A549 (cell line): ENCODE measurements at regions of chr15 and their contacts with region 1.

Region 1: DNA sequence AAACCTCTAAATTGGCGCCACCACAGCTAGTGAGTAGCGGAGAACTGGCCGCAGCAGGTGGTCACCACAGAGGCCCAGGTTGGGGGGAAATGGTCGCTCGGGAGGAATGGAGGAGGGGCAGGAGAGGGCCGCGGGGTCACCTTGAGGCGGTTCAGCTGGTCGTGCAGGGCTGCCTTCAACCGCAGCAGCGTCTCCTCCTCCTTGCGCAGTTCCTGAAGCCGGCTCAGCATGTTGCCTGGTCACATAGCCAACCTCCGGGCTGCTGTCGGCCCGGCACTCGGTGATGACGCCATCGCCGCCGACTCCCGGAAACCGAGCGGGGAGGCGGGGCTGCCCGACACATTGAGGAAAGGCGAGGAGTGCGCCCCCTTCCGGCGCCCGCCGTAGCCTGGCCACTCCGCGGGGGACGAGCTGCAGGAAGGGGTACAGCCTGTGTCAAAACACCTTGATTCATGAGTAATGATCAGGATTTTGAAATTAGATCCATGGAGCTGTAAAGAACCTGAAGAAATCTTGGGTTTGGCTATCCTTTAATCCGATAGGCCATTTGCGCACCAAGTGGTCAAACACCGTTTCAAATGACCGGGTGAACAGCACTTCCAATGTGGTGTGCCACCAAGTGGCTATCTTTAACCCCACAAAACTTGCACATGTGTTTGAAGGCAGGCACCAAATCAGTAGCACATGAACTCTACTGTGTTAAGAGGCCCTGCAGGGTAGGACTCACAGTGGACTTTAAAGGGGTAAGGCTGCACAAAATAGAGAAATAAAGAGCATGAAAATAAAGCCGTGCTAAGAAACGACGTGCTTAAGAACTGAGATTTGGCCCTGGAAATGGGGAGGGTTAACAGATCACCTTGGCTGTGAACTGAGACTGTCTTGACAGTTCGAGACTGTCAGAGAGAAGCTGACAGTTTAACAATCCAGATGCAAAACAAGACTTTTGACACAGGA is at the start of gene SNAPC5:
- DNase-seq: peak; percentile 85 to 96
- ATAC-seq: peak; percentile 84 to 89
- H3K4me3 ChIP-seq: peak within 1 kb of the TSS; percentile 84
- H3K27ac ChIP-seq: peak within 1 kb of the TSS; percentile 91 to 92
- H3K4me1 ChIP-seq: peaks cover 54% of the 10 kb centered on the region
- CTCF ChIP-seq: peak; percentile 100
- EP300 ChIP-seq: no peak
- POLR2A ChIP-seq: peak; percentile 87
- RAD21 ChIP-seq: peak; percentile 36 to 67
- polyA plus RNA-seq, gene SNAPC5: 70.5 and 84.9 TPM in 2 replicates

Region 2: DNA sequence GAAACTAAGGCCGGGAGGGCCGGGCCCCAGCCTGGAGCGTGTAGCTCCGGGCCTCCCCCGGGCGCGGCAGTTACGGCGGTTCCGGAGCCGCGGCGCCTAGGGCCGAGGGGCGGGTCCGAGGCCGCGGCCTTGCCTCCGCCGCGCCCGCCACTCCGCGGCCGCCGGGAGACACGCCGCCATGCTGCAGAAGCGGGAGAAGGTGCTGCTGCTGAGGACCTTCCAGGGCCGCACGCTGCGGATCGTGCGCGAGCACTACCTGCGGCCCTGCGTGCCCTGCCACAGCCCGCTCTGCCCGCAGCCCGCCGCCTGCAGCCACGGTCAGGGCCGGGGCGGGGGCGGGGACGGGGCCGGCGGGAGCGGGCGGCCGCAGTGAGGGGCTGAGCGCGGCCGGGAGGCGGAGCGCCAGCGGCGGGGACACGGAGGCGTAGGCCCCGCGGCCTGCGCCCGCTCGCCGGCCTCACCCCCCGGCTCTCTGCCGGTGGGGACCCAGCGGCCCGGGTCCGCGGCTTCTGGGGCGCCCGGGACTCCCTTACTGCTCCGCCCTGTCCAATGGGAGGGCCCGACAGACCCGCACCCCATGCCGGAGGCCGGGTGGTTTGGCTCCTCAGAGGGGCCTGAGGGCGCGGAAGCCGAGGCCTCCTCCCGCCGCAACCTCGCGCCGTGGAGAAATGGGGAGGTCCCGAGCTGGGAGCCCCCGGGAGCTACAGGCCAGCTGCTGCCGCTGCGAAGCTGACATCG is 204.2 kb before region 1 on chr15 and contains the start of gene DIS3L:
- CTCF ChIA-PET with region 1: interaction called, 11 read pairs
- POLR2A ChIA-PET with region 1: interaction called, 3 read pairs
- DNase-seq: peak; percentile 81 to 82
- ATAC-seq: peak; percentile 89 to 90
- H3K4me3 ChIP-seq: peak within 1 kb of the TSS; percentile 51
- H3K27ac ChIP-seq: peak within 1 kb of the TSS; percentile 95
- H3K4me1 ChIP-seq: peaks cover 21% of the 10 kb centered on the region
- CTCF ChIP-seq: no peak
- EP300 ChIP-seq: no peak; a peak in 1 of 5 replicates
- POLR2A ChIP-seq: peak; percentile 84
- RAD21 ChIP-seq: no peak
- polyA plus RNA-seq, gene DIS3L: 64.3 and 74.9 TPM in 2 replicates

Region 3: DNA sequence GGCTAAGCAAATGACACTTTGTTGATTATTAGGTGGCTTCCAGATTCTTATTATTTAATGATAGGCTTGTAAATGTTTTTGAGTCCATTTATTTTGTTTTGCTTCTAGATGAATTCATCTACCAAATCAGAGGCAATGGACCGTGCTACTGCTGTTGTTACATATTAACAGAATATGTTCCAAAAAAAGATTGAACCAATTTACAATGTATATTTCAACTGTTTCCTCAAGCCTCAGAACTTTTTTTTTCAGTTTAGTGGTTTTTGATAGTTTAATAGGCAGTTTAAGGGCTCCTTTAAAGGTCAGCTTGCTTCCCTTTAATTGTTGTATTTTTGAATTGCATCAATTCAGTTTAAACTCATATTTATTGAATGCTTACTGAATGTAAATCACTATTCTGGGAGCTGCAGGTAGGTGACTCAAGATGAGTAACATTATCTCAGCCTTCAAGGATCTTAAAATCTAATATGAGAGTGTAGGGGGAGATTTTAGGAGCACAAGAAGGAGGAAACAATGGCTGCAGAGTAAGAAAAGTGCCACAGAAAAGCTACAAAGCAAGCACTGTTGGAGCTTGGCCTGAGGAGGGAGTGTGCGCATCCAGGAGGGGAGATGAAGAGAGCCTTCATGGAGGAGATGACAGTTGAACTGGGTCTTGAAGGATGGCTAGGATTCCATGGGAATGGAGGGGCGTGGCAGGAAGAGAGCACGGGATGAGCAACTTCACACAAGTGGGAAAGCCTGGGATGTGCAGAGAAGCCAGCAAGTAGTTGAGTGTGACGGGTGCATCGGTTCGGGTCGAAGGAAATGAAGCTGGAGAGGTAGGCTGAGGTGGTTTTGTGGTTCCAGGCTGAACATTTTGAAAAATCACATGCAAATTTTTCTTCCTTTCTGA is 96.4 kb before region 1 on chr15:
- CTCF ChIA-PET with region 1: interaction called, 20 read pairs
- POLR2A ChIA-PET with region 1: no interaction called
- DNase-seq: peak in 1 of 2 experiments; percentile 45
- ATAC-seq: peak; percentile 56 to 70; a peak in 4 of 6 replicates
- H3K4me3 ChIP-seq: no peak overlapping the region
- H3K27ac ChIP-seq: no peak overlapping the region
- H3K4me1 ChIP-seq: peaks cover 20% of the 10 kb centered on the region
- CTCF ChIP-seq: no peak
- EP300 ChIP-seq: no peak
- POLR2A ChIP-seq: no peak
- RAD21 ChIP-seq: no peak

Region 4: GRCh38 chr15:66472176-66472999 is 25.4 kb before region 1 on chr15:
- CTCF ChIA-PET with region 1: interaction called, 24 read pairs
- POLR2A ChIA-PET with region 1: no interaction called
- DNase-seq: no peak
- ATAC-seq: peak in 1 of 2 experiments; percentile 29; a peak in 3 of 6 replicates
- H3K4me3 ChIP-seq: no peak overlapping the region
- H3K27ac ChIP-seq: peak overlapping the region in 1 of 2 experiments; percentile 34; a peak in 2 of 6 replicates
- H3K4me1 ChIP-seq: peaks cover 14% of the 10 kb centered on the region
- CTCF ChIP-seq: no peak
- EP300 ChIP-seq: no peak
- POLR2A ChIP-seq: no peak
- RAD21 ChIP-seq: no peak

Region 5: GRCh38 chr15:66483131-66483566 is 14.6 kb before region 1 on chr15:
- CTCF ChIA-PET with region 1: interaction called, 46 read pairs
- POLR2A ChIA-PET with region 1: no interaction called
- DNase-seq: no peak
- ATAC-seq: no peak
- H3K4me3 ChIP-seq: no peak overlapping the region
- H3K27ac ChIP-seq: peak overlapping the region in 1 of 2 experiments; percentile 40; a peak in 2 of 6 replicates
- H3K4me1 ChIP-seq: peaks cover 9% of the 10 kb centered on the region
- CTCF ChIP-seq: no peak
- EP300 ChIP-seq: no peak
- POLR2A ChIP-seq: no peak
- RAD21 ChIP-seq: no peak

Region 6: GRCh38 chr15:66566963-66567531 is 69.3 kb after region 1 on chr15:
- CTCF ChIA-PET with region 1: interaction called, 16 read pairs
- POLR2A ChIA-PET with region 1: no interaction called
- DNase-seq: peak; percentile 81 to 86
- ATAC-seq: peak; percentile 77 to 92
- H3K4me3 ChIP-seq: no peak overlapping the region
- H3K27ac ChIP-seq: 0 out of 6 replicates have a peak overlapping the region, but pooled peaks of 1 of the 2 experiments have one; percentile 12
- H3K4me1 ChIP-seq: no peaks in the 10 kb centered on the region
- CTCF ChIP-seq: peak; percentile 91
- EP300 ChIP-seq: no peak
- POLR2A ChIP-seq: no peak
- RAD21 ChIP-seq: peak; percentile 46 to 54; a peak in 4 of 5 replicates

Region 7: DNA sequence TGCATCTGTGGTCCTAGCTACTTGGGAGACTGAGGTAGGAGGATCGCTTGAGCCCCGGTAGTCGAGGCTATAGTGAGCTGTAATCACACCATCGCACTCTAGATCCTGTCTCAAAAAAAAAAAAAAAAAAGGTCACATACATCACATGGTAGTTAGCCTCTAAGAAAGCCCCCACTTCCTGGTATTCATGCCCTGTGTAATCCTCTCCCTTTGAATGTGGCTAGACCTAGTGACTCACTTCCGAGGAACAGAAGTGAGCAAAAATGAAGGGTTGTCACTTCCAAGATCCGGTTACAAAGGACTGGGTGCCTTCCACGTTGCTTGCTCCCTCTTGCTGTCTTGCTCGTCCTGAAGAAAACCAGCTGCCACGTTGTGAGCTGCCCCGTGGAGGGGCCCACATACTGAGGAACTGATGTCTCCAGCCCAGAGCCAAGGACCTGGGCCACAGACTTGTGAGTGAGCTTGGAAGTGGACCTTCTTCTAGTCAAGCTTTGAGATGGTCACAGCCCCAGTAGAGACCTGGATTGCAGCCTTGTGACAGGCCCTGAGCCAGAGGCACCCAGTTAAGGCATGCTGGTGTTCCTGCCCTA is 80.6 kb after region 1 on chr15:
- CTCF ChIA-PET with region 1: no interaction called
- POLR2A ChIA-PET with region 1: no interaction called
- DNase-seq: no peak
- ATAC-seq: no peak
- H3K4me3 ChIP-seq: no peak overlapping the region
- H3K27ac ChIP-seq: no peak overlapping the region
- H3K4me1 ChIP-seq: no peaks in the 10 kb centered on the region
- CTCF ChIP-seq: no peak
- EP300 ChIP-seq: no peak
- POLR2A ChIP-seq: no peak
- RAD21 ChIP-seq: no peak

Region 8: GRCh38 chr15:66877477-66878271 is 379.9 kb after region 1 on chr15:
- CTCF ChIA-PET with region 1: no interaction called
- POLR2A ChIA-PET with region 1: no interaction called
- DNase-seq: no peak
- ATAC-seq: no peak
- H3K4me3 ChIP-seq: no peak overlapping the region
- H3K27ac ChIP-seq: peak overlapping the region in 1 of 2 experiments; percentile 64; a peak in 3 of 6 replicates
- H3K4me1 ChIP-seq: peaks cover 30% of the 10 kb centered on the region
- CTCF ChIP-seq: no peak
- EP300 ChIP-seq: no peak
- POLR2A ChIP-seq: no peak
- RAD21 ChIP-seq: no peak